HEK293 (cell line): ENCODE measurements at regions of chr12 and their contacts with region 1.

Region 1: DNA sequence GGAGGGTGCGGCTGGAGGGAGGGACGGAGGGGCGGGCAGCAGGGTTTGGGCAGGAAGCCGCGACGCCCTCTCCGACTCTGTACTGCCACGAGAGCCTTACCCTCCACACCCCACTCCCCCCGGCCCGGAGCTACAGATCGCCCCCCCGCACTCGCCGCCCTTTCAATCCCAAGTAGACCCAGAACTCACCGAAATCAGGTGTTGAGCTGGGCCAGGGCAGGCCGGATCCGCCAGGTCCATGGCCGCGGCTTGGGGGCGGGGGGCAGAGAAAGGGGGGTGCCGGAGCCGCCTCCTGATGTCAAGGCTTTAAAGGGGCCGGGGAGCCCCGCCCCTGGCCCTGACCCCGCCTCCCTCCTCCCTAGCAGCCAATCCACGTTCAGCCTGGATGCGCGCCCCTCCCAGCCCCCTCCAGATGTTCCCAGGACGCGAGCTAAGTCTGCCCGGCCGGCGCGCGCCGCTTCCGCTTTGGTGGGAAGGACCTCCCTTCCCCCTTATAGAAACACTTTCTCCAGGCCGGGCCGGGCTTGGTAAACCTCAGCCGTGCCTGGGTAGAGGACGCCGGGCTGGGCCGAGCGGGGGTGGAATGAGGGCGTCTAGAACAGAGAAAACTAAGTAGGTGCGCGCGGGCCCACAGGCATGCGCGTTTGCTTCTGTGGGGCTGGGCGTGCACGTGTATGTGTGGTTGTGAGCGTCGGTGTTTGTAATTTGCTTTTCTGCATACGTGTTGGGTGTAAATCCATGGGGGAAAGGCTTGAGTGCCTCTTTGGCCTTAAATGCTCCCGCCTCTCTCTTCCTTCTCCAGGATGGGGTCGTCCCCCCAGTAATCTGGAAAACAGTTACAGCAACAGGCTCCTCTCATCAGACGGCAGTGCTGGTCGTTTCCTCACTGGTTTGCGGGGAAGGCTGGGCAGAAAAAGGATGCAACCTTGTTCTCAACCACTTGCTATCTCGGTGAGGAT is at the start of gene NCKAP5L:
- H3K4me3 ChIP-seq: peak within 1 kb of the TSS; percentile 77
- H3K27ac ChIP-seq: peak within 1 kb of the TSS; percentile 88
- H3K4me1 ChIP-seq: peaks cover 25% of the 10 kb centered on the region
- CTCF ChIP-seq: no peak

Region 2: DNA sequence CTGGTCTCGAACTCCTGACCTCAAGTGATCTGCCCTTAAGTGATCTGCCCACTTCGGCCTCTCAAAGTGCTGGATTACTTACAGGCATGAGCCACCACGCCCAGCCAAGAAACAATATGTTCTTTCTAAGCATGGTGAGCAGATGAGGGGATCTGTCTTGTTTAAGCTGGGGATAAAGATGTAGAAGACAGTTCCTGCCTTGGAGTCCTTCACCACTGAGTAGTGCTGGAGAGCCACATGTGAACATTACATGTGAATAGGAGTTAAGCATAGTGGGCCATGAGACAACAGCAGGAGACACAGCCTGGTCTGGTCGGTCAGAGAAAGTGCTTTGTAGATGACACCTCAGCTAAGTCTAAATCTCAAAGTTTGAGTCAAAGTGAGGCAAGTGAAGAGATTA is 61.1 kb before region 1 on chr12:
- CTCF ChIA-PET with region 1: no interaction called
- POLR2A ChIA-PET with region 1: no interaction called
- H3K4me3 ChIP-seq: no peak overlapping the region
- H3K27ac ChIP-seq: no peak overlapping the region
- H3K4me1 ChIP-seq: no peaks in the 10 kb centered on the region
- CTCF ChIP-seq: no peak

Region 3: DNA sequence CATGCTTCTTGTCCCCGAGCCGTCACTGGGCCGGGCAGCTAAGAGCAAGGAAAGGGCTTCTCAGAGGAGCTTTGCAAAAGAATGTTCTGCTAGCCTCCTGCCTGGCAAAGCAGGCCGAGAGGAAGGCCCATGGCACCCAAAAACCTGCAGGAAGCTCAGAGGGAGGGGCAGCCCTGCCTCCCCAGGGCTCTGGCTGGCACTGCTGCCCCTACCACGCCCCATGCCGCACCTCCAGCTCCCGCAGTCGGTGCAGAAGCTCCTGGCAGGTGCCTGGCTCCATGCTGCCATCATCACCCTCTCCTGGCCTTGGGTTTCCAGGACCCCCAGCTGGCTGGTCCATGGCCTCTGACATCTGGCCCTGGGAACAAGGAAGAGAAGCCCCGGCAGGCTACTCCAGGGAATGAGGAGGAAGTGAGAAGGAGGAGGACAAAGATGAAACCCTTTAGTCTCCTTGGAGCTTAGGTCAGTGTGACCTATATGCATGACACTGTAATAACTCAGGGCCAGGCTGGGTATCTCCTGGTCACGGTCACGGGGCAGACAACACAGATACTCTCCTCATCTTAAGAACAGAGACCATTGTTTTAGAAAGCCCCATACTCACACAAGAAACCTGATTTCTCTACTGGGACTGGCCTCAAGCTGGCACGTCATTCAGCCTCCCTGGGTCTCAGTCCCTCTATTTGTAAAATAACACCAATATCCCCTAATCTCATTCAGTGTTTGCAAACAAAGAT is 24.6 kb before region 1 on chr12:
- CTCF ChIA-PET with region 1: no interaction called
- POLR2A ChIA-PET with region 1: interaction called, 10 read pairs
- H3K4me3 ChIP-seq: no peak overlapping the region
- H3K27ac ChIP-seq: no peak overlapping the region
- H3K4me1 ChIP-seq: no peaks in the 10 kb centered on the region
- CTCF ChIP-seq: no peak

Region 4: DNA sequence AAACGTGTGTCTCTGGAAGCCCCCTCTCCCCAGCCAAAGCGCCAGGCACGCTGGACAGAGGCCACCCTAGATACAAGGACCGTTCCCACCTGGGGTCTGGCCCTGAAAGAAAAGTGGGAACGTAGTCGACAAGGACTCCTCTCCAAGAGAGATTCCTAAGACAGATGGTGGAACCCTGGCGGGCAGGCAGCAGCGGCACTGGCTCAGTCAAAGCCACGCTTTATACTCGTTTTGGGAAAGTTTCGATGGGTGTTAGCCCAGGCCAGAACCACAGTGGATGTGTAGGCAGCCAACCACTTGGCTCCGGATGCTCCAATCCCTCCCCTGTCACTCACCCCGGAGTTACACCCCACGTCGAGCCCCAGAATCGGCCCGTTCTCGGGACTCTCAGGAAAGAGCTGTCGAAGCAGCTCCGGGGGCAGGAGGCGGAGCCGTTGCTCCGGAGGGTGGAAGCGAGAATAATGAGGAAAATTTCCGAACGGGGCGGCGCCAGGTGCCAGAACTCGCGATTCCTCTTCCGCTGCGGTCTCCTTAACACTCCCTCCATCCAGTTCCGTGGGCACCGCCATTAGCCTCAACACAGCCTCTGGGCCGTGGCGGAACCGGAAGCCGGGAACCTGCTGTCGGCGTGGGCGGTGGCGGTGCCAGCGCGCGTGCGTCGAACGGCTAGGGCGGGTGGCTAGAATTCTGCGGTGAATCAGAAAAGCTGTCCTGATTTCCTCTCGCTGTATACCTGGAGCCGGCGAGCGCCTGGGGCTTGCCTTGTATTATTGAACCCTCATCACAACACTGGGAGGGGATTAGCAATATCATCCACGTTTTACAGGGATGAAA is 14.3 kb after region 1 on chr12 and contains the start of gene BCDIN3D:
- CTCF ChIA-PET with region 1: interaction called, 21 read pairs
- POLR2A ChIA-PET with region 1: interaction called, 38 read pairs
- H3K4me3 ChIP-seq: peak within 1 kb of the TSS; percentile 60
- H3K27ac ChIP-seq: peak within 1 kb of the TSS; percentile 89
- H3K4me1 ChIP-seq: peaks cover 6% of the 10 kb centered on the region; the same call in 1 of the 2 replicates
- CTCF ChIP-seq: no peak